ENCODE measurements at regions of chr5 and their contacts with region 1.

Region 1: GRCh38 chr5:43422143-43422542 is 10.0 kb upstream of the CCL28 start:
- DNase-seq: no peak
- ATAC-seq: peak; percentile 95

Region 2: DNA sequence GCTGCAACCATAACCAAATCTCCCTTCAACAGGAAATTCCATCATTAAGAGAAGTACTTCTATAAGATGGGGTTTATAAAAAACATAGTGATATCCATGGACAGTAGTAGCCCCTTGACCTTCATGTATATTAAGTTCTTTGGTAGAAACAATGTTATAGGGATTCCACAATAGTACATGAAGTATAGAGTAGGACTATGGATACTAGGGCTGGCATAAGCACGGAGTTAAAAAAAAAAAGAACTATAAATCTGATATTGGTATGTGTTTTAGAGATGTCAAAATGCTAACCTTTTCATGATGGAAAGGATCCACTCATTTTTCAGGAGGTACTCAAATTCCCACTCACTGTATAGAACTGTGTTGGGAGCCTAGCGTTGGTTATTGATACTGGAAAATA is 629.4 kb after region 1 on chr5:
- intact Hi-C with region 1: loop called (anchors 5 kb)
- DNase-seq: no peak
- ATAC-seq: no peak

Measured in sciatic nerve (tissue), 2 donors.